ENCODE measurements at regions of chr17 and their contacts with region 1.

Region 1: GRCh38 chr17:50361561-50362480 is 11.2 kb downstream of the MRPL27 start:
- DNase-seq: peak; percentile 76
- ATAC-seq: peak; percentile 95
- H3K4me3 Mint-ChIP-seq: no peak overlapping the region
- H3K27ac Mint-ChIP-seq: peak overlapping the region; percentile 80
- H3K4me1 Mint-ChIP-seq: peaks cover 8% of the 10 kb centered on the region
- H3K27me3 Mint-ChIP-seq: no peaks in the 10 kb centered on the region

Region 2: DNA sequence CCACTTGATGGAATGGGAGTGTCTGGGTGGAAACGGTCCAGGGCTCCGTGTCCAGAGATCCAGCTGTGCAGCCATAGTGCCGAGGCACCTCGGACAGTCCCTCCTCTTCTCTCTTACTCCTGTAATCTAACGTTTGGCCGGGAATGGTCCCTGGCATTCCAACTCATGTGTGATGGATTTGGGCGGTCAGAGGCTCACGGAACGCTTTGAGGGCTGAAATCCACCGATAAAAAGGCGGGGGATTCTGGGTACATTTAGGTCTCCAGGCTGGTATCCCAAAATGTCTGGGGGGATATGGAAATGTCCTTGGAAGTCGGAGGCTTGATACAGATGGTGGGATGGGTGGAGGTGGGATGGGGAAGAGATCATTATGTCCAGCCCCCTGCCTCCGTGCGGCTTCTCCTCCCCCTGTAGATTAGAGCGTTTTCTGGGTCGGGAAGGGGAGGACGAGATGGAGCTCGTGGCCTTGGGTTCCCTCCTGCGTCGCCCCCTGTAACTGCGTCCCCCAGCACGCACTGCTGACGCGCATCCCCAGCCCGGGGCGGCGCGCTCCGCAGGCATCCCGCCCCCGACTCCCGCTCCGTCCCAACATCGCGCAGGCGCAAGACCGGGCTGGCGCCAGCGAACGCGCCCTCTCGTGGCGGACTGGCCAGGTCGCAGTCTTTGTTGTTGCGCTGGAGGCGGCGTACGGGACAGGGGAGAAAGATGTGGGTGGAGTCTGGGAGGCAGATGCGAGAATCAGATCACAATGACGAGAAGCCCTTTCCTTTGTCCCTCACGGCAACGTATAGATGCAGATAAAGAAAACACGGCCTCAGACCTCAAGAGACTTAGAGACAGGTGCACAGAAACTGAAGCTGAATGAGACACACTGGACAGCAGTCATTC is 200.6 kb before region 1 on chr17:
- CTCF ChIA-PET with region 1: no interaction called
- POLR2A ChIA-PET with region 1: no interaction called
- intact Hi-C with region 1: no loop called
- DNase-seq: peak; percentile 98
- ATAC-seq: peak; percentile 96
- H3K4me3 Mint-ChIP-seq: peak overlapping the region; percentile 78
- H3K27ac Mint-ChIP-seq: peak overlapping the region; percentile 99
- H3K4me1 Mint-ChIP-seq: peaks cover 42% of the 10 kb centered on the region
- H3K27me3 Mint-ChIP-seq: no peaks in the 10 kb centered on the region

Region 3: DNA sequence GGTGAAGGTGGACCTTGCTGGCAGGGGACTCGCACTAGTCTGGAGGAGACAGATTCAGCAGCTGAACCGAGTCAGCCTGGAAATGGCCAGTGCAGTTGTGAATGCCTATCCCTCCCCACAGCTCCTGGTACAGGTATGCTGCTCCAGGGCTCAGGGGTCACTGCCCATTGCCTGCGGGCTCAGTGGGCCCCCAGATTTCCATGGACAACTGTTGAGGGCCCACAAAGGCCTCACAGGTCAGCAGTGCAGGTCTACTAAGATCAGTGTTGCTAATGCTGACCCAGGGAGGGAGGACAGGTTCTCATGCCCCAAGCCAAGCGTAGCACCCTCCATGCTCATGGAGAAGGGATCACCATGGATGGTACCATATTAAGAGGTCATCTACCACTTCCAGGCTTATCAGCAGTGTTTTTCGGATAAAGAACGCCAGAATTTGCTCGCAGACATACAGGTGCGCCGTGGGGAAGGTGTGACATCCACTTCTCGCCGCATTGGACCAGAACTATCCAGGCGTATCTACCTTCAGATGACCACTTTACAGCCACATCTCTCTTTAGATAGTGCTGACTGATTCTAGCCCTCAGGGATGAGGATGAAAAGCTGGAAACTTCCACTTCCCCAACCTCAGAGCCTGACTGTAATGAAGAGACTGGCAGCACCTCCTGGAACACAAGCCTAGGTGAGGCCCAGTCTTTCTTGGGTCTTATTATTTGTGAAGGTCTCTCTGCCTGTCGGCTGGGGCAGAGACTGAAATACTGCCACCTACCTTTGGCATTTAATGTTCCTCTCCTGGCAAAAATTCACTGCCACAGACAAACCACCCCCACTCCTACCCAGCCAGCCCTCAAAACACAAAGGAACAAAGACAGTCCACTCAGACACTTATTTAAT is 18.8 kb after region 1 on chr17:
- CTCF ChIA-PET with region 1: interaction called, 24 read pairs
- POLR2A ChIA-PET with region 1: no interaction called
- intact Hi-C with region 1: no loop called
- DNase-seq: no peak
- ATAC-seq: no peak
- H3K4me3 Mint-ChIP-seq: no peak overlapping the region
- H3K27ac Mint-ChIP-seq: no peak overlapping the region
- H3K4me1 Mint-ChIP-seq: no peaks in the 10 kb centered on the region
- H3K27me3 Mint-ChIP-seq: no peaks in the 10 kb centered on the region

Region 4: DNA sequence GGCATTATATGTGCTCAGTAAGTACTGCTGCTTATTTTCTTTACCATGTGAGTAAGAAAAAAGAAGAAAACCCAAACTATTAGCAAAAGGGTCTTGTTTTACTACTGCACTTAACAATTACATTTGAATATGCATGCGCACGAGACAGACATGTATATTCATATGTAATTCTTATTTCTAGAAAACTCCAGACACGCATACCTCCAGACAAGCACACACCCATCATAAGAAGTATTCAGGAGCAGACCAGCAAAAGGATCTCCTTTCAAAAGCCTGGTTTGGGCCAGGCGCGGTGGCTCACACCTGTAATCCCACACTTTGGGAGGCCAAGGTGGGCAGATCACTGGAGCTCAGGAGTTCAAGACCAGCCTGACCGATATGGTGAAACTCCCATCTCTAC is 27.7 kb after region 1 on chr17:
- CTCF ChIA-PET with region 1: interaction called, 20 read pairs
- POLR2A ChIA-PET with region 1: interaction called, 12 read pairs
- intact Hi-C with region 1: no loop called
- DNase-seq: no peak
- ATAC-seq: no peak
- H3K4me3 Mint-ChIP-seq: no peak overlapping the region
- H3K27ac Mint-ChIP-seq: no peak overlapping the region
- H3K4me1 Mint-ChIP-seq: peaks cover 9% of the 10 kb centered on the region
- H3K27me3 Mint-ChIP-seq: no peaks in the 10 kb centered on the region

Region 5: GRCh38 chr17:50397111-50397918 is 35.5 kb after region 1 on chr17 and contains the start of gene LRRC59:
- CTCF ChIA-PET with region 1: interaction called, 53 read pairs
- POLR2A ChIA-PET with region 1: interaction called, 10 read pairs
- intact Hi-C with region 1: loop called (anchors 1 to 5 kb)
- DNase-seq: peak; percentile 95
- ATAC-seq: peak; percentile 95
- H3K4me3 Mint-ChIP-seq: peak within 1 kb of the TSS; percentile 93
- H3K27ac Mint-ChIP-seq: peak within 1 kb of the TSS; percentile 88
- H3K4me1 Mint-ChIP-seq: peaks cover 33% of the 10 kb centered on the region
- H3K27me3 Mint-ChIP-seq: no peaks in the 10 kb centered on the region
- total RNA-seq, gene LRRC59: 74.4 to 82.7 TPM